CD4-positive, alpha-beta T cell (primary cell): ENCODE measurements at regions of chr5 and their contacts with region 1.

Region 1: DNA sequence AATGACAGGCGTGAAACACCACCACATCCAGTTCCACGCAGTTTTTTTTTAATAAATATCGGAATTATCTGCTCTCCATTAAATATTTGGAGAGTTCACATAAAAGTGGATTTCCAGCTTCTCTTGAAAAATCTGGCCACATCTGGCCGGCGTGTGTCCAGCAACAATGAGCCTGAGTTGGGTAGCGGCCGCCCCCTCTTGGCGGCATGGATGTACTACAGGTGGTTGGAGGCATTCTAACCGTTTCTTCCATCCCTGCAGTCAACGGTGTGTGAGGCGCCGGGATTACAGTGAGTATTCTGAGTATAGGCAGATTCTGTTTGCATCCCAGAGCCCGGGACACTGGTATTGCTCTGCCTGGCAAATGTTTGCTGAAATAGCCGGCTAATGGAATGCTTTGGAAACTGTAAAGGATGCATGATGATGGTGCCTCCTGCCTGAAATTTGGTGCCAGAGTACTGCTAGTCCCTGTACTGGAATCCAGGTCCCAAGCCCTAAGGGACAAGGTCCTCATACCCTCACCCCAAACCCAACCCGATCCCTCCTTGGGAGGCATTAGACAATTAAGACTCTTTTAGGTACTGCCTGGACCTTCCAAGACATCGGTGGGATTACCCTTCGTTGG is 13.6 kb upstream of the GM2A start:
- DNase-seq: peak in 10 of 14 experiments; percentile 25 to 76 (median 55)
- ATAC-seq: peak; percentile 83
- H3K4me3 ChIP-seq: no peak overlapping the region
- H3K4me3 Mint-ChIP-seq: no peak overlapping the region
- H3K27ac ChIP-seq: no peak overlapping the region
- H3K27ac Mint-ChIP-seq: no peak overlapping the region
- H3K4me1 ChIP-seq: peaks cover 36% of the 10 kb centered on the region
- H3K4me1 Mint-ChIP-seq: peaks cover 29% of the 10 kb centered on the region
- H3K27me3 ChIP-seq: no peaks in the 10 kb centered on the region
- H3K27me3 Mint-ChIP-seq: no peaks in the 10 kb centered on the region
- CTCF ChIP-seq: peak; percentile 99

Region 2: DNA sequence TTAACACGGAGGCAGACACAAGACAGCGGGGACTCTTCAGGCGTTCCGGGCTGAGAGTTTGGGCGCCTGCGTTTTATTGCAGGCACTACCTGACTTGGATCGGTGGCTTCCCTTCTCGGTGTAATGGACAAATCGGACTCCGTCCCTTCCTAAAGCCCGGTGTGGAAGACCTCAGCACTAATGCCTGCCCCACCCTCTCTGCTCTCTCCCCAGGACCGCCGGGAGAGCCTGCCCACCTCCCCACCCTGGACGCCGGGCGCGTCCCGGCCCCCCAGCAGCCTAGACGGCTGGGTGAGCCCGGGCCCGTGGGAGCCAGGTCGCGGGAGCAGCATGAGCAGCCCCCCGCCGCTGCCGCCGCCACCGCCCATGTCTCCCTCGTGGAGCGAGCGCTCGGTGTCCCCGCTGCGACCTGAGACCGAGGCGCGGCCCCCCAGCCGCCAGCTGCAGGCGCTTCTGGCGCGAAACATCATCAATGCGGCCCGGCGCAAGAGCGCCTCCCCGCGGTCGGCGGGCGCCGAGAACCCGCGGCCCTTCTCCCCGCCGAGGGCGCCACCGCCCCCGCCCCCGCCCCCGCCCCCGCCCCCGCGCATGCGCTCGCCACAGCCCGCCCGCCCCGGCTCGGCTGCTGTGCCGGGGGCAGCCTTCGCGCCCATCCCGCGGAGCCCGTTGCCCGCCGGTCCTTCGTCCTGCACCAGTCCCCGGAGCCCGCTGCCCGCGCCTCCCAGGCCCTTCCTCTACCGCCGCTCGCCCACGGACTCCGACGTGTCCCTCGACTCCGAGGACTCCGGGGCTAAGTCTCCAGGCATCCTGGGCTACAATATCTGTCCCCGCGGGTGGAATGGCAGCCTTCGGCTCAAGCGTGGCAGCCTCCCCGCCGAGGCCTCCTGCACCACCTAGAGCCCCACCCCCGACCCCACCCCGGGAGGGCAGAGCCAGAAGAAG is 582.9 kb before region 1 on chr5:
- CTCF ChIA-PET with region 1: no interaction called
- POLR2A ChIA-PET with region 1: no interaction called
- intact Hi-C with region 1: loop called in 1 of 2 experiments (anchors 10 kb)
- DNase-seq: peak; percentile 67 to 92 (median 80)
- ATAC-seq: peak; percentile 94
- H3K4me3 ChIP-seq: peak overlapping the region; percentile 68
- H3K4me3 Mint-ChIP-seq: peak overlapping the region; percentile 85
- H3K27ac ChIP-seq: no peak overlapping the region
- H3K27ac Mint-ChIP-seq: no peak overlapping the region
- H3K4me1 ChIP-seq: peaks cover 15% of the 10 kb centered on the region
- H3K4me1 Mint-ChIP-seq: peaks cover 10% of the 10 kb centered on the region
- H3K27me3 ChIP-seq: no peaks in the 10 kb centered on the region
- H3K27me3 Mint-ChIP-seq: no peaks in the 10 kb centered on the region
- CTCF ChIP-seq: peak; percentile 47

Region 3: DNA sequence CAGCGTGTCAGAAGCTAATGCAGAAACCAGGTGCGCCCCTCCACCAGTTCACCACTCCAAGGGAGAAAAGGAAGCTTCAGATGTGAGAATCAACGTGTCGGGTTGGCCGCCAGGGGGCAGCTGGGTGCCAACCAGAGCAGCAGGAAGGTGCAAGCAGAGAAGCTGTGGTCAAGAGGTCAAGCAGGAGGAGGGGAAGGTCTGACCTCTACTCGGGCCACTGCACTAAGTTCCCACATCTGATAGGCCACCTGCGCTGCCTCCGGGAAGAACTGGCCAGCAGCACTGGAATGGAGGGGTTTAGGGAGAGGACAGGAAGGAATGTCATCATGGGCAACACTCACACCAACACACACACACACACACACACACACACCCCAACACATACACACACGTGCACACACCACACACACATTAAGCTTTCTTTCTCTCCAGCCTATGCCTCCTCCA is 113.1 kb before region 1 on chr5:
- CTCF ChIA-PET with region 1: interaction called, 22 read pairs
- POLR2A ChIA-PET with region 1: no interaction called
- intact Hi-C with region 1: loop called (anchors 1 to 2 kb)
- DNase-seq: peak; percentile 42 to 84 (median 62)
- ATAC-seq: peak; percentile 61
- H3K4me3 ChIP-seq: no peak overlapping the region
- H3K4me3 Mint-ChIP-seq: no peak overlapping the region
- H3K27ac ChIP-seq: peak overlapping the region in 1 of 2 donors; percentile 50
- H3K27ac Mint-ChIP-seq: peak overlapping the region; percentile 91
- H3K4me1 ChIP-seq: peaks cover 53% of the 10 kb centered on the region
- H3K4me1 Mint-ChIP-seq: peaks cover 71% of the 10 kb centered on the region
- H3K27me3 ChIP-seq: no peaks in the 10 kb centered on the region
- H3K27me3 Mint-ChIP-seq: no peaks in the 10 kb centered on the region
- CTCF ChIP-seq: peak; percentile 90

Region 4: DNA sequence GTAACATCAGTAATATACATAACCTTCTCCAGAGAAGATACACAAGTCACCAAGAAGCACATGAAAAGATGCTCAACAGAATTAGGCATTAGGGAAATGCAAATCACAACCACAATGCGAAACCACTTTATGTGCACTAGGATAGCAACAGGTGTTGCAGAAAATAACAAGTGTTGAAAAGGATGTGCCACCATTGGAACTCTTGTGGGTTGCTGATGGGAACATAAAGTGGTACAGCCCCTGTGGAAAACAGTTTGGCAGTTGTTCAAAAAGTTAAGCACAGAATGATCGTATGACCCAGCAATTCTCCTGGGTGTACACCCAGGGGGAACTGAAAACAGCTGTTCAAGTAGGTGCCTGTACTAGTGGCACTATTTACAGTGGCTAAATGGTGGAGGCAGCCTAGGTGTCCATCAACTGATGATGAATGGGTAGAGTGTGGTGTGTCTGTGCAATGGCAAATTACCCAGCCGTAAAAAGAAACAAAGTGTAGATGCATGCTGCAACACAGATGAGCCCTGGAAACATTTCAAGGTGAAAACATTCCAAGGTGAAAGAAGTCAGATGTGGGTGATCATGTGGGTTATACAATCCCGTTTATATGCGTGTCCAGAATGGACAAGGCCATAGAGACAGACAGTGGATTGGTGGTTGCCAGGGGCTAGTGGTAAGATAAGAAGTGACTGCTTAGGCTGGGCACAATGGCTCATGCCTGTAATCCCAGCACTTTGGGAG is 42.6 kb before region 1 on chr5:
- CTCF ChIA-PET with region 1: interaction called, 4 read pairs
- POLR2A ChIA-PET with region 1: no interaction called
- intact Hi-C with region 1: loop called (anchors 2 to 5 kb)
- DNase-seq: peak in 1 of 14 experiments; percentile 32
- ATAC-seq: peak; percentile 44
- H3K4me3 ChIP-seq: no peak overlapping the region
- H3K4me3 Mint-ChIP-seq: no peak overlapping the region
- H3K27ac ChIP-seq: peak overlapping the region in 1 of 2 donors; percentile 8
- H3K27ac Mint-ChIP-seq: peak overlapping the region; percentile 74
- H3K4me1 ChIP-seq: peaks cover 23% of the 10 kb centered on the region
- H3K4me1 Mint-ChIP-seq: peaks cover 72% of the 10 kb centered on the region
- H3K27me3 ChIP-seq: no peaks in the 10 kb centered on the region
- H3K27me3 Mint-ChIP-seq: no peaks in the 10 kb centered on the region
- CTCF ChIP-seq: no peak

Region 5: DNA sequence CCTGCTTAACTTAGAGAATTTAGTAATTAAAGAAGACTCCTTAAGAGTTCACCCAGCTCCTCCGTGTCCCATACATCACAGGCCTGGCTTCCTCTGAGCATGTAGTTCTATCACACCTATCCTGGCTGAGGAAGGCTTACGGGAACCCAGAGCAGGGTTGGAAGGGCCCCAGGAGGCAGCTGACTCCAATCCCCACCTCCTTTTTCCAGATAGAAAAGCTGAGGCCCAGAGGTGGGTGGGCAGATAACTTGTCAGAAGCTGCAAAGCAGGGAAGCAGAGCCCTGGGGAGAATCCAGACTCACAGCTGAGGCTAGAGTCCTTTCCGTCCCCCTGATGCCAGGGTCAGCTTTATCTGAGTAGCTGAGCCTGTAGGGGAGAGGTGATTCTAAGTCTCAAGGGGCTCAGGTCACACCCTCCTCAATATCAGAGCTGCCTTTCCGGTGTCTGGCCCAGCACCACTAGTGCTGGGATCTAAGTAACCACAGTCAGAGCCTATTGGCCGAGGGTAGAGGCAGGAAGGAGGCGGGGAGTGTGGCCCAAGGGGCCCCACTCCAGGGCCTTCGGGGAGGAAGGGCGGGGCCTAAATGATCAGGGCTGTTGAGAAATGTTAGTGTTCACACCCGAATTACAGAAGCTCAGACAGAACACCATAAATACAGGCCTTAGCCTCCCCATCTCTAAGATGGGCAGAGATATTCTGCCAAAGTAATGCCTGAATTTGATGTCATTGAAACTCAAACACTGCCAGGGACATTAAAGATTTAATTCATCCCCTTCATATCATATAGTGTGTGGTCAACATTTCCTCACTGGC is 25.3 kb before region 1 on chr5:
- CTCF ChIA-PET with region 1: interaction called, 17 read pairs
- POLR2A ChIA-PET with region 1: interaction called, 8 read pairs
- intact Hi-C with region 1: no loop called
- DNase-seq: peak; percentile 66 to 94 (median 86)
- ATAC-seq: peak; percentile 81
- H3K4me3 ChIP-seq: peak overlapping the region; percentile 55
- H3K4me3 Mint-ChIP-seq: peak overlapping the region; percentile 89
- H3K27ac ChIP-seq: peak overlapping the region; percentile 92 to 97
- H3K27ac Mint-ChIP-seq: peak overlapping the region; percentile 94
- H3K4me1 ChIP-seq: peaks cover 99% of the 10 kb centered on the region
- H3K4me1 Mint-ChIP-seq: peaks cover 94% of the 10 kb centered on the region
- H3K27me3 ChIP-seq: no peaks in the 10 kb centered on the region
- H3K27me3 Mint-ChIP-seq: no peaks in the 10 kb centered on the region
- CTCF ChIP-seq: no peak